ENCODE measurements at regions of chr15 and their contacts with region 1.

Region 1: DNA sequence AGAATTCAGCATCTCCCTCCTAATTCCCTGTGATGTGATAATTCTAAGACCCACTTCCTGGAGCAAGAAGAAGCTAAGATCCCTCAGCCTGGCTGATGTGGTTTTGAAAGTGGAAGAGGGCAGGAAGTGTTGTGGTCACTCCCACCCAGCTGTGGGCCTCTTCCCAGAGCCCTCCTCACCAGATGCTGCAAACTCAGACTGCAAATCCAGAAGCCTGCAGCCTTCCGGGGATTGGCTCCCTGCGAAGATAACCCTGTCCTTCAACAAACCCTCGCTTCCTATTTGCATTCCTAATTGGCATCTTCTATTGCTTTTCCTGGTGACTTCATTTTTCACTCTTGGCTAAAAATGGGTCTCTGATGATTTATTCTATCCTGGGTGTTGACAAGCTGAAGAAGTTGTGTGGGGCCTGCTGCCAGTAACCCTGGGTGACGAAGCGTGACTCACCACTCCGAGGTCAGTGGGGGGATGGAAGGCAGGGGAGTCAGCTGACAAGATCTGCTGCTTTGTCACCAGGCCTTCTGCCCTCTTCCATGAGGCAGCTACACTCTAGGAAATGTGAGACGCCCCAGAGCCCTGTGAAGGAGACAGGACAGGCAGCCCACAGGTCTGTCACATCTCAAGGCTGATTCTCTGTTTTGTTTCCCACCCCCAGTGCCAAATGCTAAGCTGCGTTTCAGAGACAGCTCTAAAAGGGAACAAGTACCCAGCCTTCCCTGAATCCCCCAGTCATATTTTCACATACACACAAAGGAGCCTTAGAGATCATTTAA is 99.7 kb upstream of the LIPC start:
- DNase-seq: peak; percentile 81 to 100
- ATAC-seq: peak; percentile 90
- H3K4me3 ChIP-seq: 0 out of 3 replicates have a peak overlapping the region, but pooled peaks have one; percentile 1
- H3K27ac ChIP-seq: peak overlapping the region; percentile 92
- H3K4me1 ChIP-seq: peaks cover 43% of the 10 kb centered on the region
- CTCF ChIP-seq: no peak
- EP300 ChIP-seq: peak; percentile 96
- POLR2A ChIP-seq: peak; percentile 28; the same call in 1 of the 2 replicates
- RAD21 ChIP-seq: peak; percentile 63 to 79

Region 2: GRCh38 chr15:57923750-57924149 is 408.3 kb before region 1 on chr15:
- CTCF ChIA-PET with region 1: no interaction called
- POLR2A ChIA-PET with region 1: no interaction called
- DNase-seq: no peak
- ATAC-seq: no peak
- H3K4me3 ChIP-seq: no peak overlapping the region
- H3K27ac ChIP-seq: no peak overlapping the region
- H3K4me1 ChIP-seq: peaks cover 13% of the 10 kb centered on the region; the same call in 2 of the 3 replicates
- CTCF ChIP-seq: no peak
- EP300 ChIP-seq: no peak
- POLR2A ChIP-seq: no peak
- RAD21 ChIP-seq: no peak

Region 3: DNA sequence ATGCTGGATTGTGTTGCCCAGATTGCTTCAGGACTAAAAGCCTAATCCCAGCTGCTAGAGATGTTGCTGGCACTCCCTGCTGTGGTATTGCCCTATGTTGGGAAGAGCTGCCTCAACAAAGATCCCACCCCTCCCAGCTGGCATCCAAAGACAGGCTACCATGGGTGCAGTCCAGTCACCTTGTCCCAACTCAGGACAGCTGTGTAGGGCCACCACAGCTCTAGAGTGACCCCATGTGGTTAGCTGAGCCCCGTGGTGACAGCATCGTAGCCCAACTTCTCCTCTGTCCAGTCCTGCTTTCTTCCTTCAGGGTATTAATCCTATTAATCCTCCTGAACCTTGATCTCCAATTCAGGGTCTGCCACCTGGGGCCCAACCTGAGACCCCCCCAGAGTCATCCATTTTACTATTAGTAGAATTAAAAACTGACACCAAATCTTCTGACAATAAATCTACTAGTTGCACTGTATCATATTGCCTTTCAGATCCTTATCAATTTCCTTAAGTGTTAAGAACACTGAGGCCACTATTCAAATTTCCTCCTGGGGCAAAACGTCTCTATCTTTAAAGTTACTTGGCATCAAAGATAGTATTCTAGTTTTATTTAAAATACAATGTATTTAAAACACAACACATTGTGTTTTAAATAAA is 110.4 kb before region 1 on chr15:
- CTCF ChIA-PET with region 1: no interaction called
- POLR2A ChIA-PET with region 1: no interaction called
- DNase-seq: peak; percentile 53 to 72
- ATAC-seq: peak; percentile 93 to 97
- H3K4me3 ChIP-seq: no peak overlapping the region
- H3K27ac ChIP-seq: no peak overlapping the region
- H3K4me1 ChIP-seq: no peaks in the 10 kb centered on the region
- CTCF ChIP-seq: peak; percentile 55
- EP300 ChIP-seq: no peak
- POLR2A ChIP-seq: no peak
- RAD21 ChIP-seq: peak; percentile 58 to 76; a peak in 4 of 5 replicates

Region 4: DNA sequence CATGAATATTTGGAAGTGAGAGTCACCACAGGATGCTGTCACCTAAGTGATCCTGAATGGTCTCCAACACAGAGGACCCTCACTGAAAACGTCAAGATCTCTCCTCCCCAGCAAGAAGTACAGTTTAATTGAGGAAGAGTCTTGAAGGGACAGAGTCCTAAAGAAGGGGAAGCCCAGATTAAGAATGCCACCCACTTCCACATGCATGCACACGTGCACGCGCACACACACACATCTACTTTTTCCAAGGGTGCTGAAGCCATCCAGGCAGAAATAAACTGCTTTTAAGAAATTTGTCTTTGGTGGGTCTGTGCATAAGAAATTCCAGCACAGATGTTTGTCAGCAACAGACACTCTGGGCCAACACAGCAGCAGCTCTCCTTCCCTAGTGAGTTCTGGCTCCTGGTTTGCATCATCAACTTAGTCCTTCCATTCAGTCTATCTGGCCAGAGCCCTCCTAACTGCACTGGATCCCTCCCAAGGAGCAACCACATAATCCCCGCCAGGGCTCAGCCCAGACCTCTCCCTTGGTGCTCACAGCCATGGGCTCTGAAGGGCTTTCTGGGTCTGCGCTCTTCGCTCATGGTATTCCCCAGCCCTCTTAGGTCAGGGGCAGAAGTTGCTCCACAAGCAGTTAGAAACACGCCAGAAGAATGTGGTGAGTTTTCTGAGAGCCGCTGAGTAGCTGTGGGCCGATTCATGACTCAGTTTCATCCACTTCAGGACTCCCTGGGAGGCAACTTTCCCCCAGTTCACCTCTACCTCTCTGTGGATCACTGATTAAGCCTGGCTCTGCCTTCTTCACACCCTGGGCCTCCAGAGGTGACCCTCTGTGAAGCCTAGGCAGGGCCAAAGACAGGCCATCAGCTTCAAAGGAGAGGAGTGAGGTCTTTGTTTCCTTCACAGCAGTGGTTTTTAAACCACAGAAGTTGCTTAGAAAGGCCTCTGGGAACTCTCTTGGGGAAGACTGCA is 32.9 kb before region 1 on chr15:
- CTCF ChIA-PET with region 1: no interaction called
- POLR2A ChIA-PET with region 1: no interaction called
- DNase-seq: no peak
- ATAC-seq: no peak
- H3K4me3 ChIP-seq: no peak overlapping the region
- H3K27ac ChIP-seq: no peak overlapping the region
- H3K4me1 ChIP-seq: no peaks in the 10 kb centered on the region
- CTCF ChIP-seq: no peak
- EP300 ChIP-seq: no peak
- POLR2A ChIP-seq: no peak
- RAD21 ChIP-seq: no peak

Region 5: GRCh38 chr15:58396181-58396580 is 64.1 kb after region 1 on chr15:
- CTCF ChIA-PET with region 1: no interaction called
- POLR2A ChIA-PET with region 1: interaction called, 15 read pairs
- DNase-seq: peak in 1 of 2 experiments; percentile 40
- ATAC-seq: peak; percentile 60; a peak in 4 of 6 replicates
- H3K4me3 ChIP-seq: no peak overlapping the region
- H3K27ac ChIP-seq: peak overlapping the region; percentile 54 to 77
- H3K4me1 ChIP-seq: peaks cover 30% of the 10 kb centered on the region
- CTCF ChIP-seq: no peak
- EP300 ChIP-seq: peak; percentile 35 to 75; a peak in 2 of 5 replicates
- POLR2A ChIP-seq: no peak
- RAD21 ChIP-seq: peak in 1 of 2 experiments; percentile 46; a peak in 2 of 5 replicates

Region 6: DNA sequence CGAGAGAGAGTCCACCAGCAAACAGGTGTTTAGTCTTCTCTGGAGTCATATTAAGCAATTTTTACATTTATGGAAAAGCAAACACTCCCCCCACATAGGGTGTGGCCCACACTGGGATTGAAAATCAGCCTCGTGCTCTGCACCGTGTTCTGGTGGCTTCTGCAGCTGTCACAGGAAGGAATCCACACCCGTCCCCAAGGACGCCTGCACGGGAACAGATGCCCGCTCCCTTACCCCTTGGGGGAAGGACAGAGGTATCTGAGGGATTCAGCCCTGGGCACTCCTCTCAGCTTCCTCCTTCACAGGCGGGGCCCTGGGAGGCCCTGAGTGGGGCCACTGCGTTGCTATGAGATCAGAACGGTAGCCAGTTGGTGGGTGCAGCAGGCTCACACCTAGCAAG is 127.5 kb after region 1 on chr15:
- CTCF ChIA-PET with region 1: no interaction called
- POLR2A ChIA-PET with region 1: interaction called, 10 read pairs
- DNase-seq: no peak
- ATAC-seq: no peak
- H3K4me3 ChIP-seq: no peak overlapping the region
- H3K27ac ChIP-seq: peak overlapping the region; percentile 52 to 70; a peak in 5 of 6 replicates
- H3K4me1 ChIP-seq: peaks cover 48% of the 10 kb centered on the region
- CTCF ChIP-seq: no peak
- EP300 ChIP-seq: no peak
- POLR2A ChIP-seq: no peak
- RAD21 ChIP-seq: no peak

Region 7: DNA sequence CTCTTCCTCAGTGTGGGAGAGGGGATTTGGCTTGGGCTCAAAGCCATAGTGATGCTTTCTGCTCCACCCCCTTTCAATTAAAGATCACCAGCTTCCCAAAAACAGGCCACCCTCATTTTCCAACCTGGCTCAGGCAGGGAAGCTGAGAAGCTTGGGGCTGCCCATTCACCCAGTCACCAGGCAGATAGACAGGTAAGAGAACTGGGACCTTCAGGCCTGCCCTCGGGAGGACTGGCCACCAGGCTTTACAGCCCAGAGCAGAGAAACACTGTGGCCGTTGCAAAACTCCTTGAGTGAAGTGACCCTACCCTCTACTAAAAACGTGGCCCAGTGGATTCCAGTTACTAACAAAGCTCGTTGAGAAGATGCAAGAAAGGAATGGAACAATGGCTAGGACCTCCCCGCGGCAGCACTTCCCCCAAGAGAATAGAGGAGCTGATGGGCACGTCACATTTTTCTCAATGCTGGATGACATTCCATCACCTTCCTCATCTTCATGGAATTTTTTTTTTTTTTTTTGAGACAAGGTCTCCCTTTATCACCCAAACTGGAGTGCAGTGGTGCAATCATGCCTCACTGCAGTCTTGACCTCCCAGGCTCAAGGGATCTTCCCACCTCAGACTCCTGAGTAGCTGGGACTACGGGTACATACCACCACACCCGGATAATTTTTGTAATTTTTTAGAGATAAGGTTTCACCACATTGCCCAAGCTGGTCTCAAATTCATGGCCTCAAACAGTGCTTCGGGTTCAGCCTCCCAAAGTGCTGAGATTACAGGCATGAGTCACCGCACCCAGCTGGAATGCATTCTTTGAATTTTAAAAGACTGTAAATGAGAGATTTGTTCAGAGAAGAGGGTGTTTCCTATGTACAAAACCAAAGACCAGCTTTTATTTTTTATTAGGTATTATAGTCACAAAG is 137.6 kb after region 1 on chr15:
- CTCF ChIA-PET with region 1: interaction called, 15 read pairs
- POLR2A ChIA-PET with region 1: interaction called, 35 read pairs
- DNase-seq: peak; percentile 69 to 97
- ATAC-seq: peak; percentile 86 to 93
- H3K4me3 ChIP-seq: no peak overlapping the region
- H3K27ac ChIP-seq: peak overlapping the region; percentile 96 to 99
- H3K4me1 ChIP-seq: peaks cover 58% of the 10 kb centered on the region
- CTCF ChIP-seq: no peak
- EP300 ChIP-seq: peak; percentile 95 to 99
- POLR2A ChIP-seq: no peak
- RAD21 ChIP-seq: peak; percentile 51 to 84

Region 8: DNA sequence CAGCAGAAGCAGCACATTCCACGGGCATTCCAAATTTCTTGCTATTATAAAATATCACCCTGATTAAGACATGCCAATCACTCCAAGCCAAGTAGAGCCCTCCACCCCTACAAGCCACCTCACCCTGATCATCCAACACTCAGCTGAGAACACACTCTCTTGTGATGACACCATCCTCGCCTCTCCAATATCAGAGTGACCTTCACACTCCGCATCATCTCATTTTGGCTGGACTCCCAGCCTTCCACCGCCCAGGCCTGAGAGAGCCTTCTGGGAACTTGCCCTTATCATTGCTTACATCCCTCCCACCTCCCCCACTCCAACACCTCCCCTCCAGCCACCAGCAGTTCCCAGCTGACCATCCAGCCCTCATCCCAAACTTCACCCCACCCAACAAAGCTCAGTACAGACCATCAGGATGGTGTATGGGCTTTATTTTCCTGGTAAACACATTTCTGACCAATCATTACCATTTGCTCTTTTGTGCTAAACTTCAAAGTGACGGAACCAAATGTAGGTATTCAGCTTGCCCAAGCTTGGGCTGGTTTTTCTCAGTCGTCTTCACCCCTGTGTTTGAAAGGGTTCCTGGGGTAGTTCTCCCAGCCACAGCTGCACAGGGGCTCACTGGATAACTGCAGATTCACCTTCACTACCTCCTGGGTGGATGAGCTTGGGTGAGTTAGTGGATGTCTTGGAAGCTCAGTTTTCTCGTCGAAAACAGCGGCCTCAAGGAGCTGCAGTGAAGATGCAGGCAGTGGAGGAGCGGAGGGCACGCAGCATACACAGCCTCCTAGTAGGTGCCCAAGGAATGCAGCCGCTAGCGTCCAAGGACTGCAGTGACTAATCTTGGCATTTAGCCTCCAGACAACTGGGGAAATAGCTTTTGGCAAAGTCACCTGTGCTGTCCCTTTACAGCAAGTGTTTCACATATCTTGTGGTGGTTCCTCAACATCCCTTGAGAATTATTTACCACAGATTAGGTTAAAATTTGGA is 214.8 kb after region 1 on chr15:
- CTCF ChIA-PET with region 1: interaction called, 7 read pairs
- POLR2A ChIA-PET with region 1: interaction called, 31 read pairs
- DNase-seq: peak; percentile 93 to 95
- ATAC-seq: peak; percentile 93 to 96
- H3K4me3 ChIP-seq: peak overlapping the region; percentile 18; the same call in 1 of the 3 replicates
- H3K27ac ChIP-seq: peak overlapping the region; percentile 95
- H3K4me1 ChIP-seq: peaks cover 51% of the 10 kb centered on the region
- CTCF ChIP-seq: no peak
- EP300 ChIP-seq: peak; percentile 71 to 84; a peak in 3 of 5 replicates
- POLR2A ChIP-seq: no peak
- RAD21 ChIP-seq: peak; percentile 49 to 50; a peak in 4 of 5 replicates

Region 9: DNA sequence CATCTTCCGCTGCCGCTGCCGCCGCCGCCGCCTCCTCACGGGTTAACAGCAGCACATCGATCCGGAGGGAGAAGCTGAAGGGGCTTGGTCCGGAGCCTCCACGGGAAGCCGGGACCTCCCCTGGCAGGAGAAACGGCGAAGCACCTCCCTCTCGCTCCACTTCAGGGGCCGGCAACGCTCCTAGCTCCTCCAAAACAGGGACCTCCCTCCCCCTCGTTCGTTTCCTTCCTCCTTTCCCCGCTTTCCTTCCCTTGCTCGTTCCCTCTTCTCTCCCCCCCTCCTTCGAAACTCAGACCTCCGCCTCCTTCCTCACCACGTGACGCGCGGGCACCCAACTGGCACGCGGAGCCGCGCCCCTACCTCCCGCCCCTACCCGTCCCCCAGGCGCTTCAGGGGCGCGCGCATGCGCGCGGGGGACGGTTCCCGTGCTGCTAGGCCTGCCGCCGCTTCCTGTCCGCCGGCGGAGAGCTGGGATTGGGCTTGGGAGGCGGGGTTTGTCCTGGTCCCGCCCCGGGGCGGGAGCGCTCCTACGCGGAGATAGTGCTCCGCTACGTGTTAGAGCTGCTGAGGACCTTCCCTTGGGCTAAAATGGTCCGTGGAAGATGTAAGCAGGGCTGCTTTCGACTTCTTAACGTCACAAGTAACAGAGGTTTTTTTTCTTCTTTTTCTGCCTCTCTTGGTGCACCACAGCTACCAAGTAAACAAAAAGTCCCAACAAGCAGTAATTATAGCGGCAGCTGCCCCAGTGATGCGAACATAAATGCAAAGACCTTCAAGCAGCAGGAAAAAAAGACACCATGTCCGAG is 417.6 kb after region 1 on chr15 and contains the start of gene ADAM10:
- CTCF ChIA-PET with region 1: no interaction called
- POLR2A ChIA-PET with region 1: interaction called, 19 read pairs
- DNase-seq: peak; percentile 99
- ATAC-seq: peak; percentile 89 to 97
- H3K4me3 ChIP-seq: peak within 1 kb of the TSS; percentile 91
- H3K27ac ChIP-seq: peak within 1 kb of the TSS; percentile 93 to 97
- H3K4me1 ChIP-seq: peaks cover 26% of the 10 kb centered on the region
- CTCF ChIP-seq: no peak
- EP300 ChIP-seq: no peak; a peak in 1 of 5 replicates
- POLR2A ChIP-seq: peak; percentile 90
- RAD21 ChIP-seq: 0 out of 5 replicates have a peak, but pooled peaks have one; percentile 14 to 18
- polyA plus RNA-seq, gene ADAM10: 210 and 236 TPM in 2 replicates

Region 10: DNA sequence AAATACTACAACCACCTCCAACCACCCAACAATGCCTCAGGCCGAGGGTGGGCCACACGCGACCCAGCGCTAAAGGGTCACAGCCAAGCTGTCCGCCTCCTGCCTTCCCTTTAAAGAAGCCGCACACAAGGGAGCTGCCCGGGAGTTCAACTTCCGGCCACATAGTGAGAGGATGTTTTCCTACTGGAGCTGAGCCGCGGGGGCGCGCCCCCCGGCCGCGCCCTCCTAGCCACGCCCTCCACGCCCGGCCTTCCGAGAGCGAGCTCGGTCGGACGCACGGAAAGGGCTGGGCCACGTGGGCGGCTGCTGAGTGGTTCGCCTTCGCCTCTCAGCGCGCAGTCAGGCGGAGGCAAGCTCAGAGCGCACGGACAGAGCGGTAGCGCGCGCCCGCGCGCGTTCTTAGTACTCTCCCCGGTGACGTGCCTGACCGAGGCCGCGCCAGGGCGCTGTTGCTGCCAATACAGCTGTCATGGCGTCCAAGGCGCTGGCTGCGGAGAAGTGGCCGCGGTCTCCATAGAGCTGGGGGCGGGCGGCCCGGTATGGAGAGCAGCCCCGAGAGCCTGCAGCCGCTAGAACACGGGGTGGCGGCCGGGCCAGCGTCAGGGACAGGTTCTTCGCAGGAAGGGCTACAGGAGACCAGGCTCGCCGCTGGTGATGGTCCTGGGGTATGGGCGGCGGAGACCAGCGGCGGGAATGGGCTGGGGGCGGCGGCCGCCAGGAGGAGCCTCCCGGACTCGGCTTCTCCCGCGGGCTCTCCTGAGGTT is 438.9 kb after region 1 on chr15 and contains the start of gene MINDY2:
- CTCF ChIA-PET with region 1: interaction called, 3 read pairs
- POLR2A ChIA-PET with region 1: interaction called, 39 read pairs
- DNase-seq: peak; percentile 97 to 99
- ATAC-seq: peak; percentile 94 to 98
- H3K4me3 ChIP-seq: peak within 1 kb of the TSS; percentile 80
- H3K27ac ChIP-seq: peak within 1 kb of the TSS; percentile 85 to 96
- H3K4me1 ChIP-seq: peaks cover 23% of the 10 kb centered on the region
- CTCF ChIP-seq: peak; percentile 34; the same call in 2 of the 3 replicates
- EP300 ChIP-seq: no peak
- POLR2A ChIP-seq: peak; percentile 81
- RAD21 ChIP-seq: peak; percentile 20 to 48
- polyA plus RNA-seq, gene MINDY2: 4.8 and 7.0 TPM in 2 replicates